Prostate gland (tissue), 2 donors: ENCODE measurements at regions of chr17 and their contacts with region 1.

Region 1: DNA sequence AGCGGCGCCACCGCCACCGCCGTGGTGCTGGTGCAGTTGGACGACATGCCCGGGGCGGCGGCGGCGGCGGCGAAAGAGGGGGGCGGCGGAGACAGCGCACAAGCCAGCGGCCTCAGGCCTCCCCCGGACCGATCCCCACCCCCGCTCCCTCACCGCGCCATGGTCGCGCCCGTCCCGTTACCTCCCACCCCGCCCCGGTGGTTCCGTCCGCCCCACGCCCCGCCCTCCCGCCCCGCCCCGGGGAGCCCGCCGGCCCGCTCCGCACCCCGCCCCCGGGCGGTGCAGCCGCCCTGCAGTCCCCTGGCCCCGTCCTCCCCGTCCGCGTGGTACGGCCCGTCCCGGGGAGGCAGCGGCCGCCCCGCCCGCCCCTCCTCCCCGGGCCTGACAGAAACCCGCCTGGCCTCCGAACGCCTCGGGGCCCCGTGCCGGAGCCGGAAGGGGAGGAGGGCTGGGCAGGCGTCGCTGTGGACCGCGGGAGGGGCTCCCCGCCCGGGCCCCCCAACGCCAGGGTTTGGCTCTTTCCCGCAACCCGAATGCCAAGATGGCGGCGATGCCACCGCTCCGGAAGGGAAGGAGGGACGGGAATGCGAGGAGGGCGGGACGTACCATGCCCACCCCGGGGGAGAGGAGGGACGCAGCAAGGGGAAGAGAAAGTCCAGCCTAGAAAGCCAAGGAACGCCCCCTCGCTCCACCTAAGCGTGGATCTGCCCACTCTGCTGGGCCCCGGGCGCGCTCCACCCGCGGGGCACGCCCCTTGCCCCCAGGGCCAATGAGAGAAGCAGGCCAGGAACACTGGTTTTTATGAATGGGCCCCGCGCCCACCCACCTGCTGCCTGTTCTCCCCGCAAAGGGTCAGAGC is at the start of gene PIP4K2B:
- DNase-seq: peak; percentile 94
- H3K4me3 ChIP-seq: peak within 1 kb of the TSS; percentile 87 to 88
- H3K27ac ChIP-seq: peak within 1 kb of the TSS; percentile 99
- H3K4me1 ChIP-seq: peaks cover 11% of the 10 kb centered on the region
- H3K27me3 ChIP-seq: no peaks in the 10 kb centered on the region
- CTCF ChIP-seq: no peak
- POLR2A ChIP-seq: no peak
- total RNA-seq, gene PIP4K2B: 46.2 to 65.2 TPM

Region 2: GRCh38 chr17:38752119-38752929 is 47.3 kb before region 1 on chr17 and contains the start of gene PSMB3:
- intact Hi-C with region 1: loop called (anchors 5 kb)
- DNase-seq: peak; percentile 99
- H3K4me3 ChIP-seq: peak within 1 kb of the TSS; percentile 90 to 99
- H3K27ac ChIP-seq: peak within 1 kb of the TSS; percentile 76 to 95
- H3K4me1 ChIP-seq: peaks cover 8% of the 10 kb centered on the region
- H3K27me3 ChIP-seq: no peaks in the 10 kb centered on the region
- CTCF ChIP-seq: peak in 1 of 4 experiments; percentile 22
- POLR2A ChIP-seq: peak; percentile 11
- total RNA-seq, gene PSMB3: 116 to 192 TPM

Region 3: DNA sequence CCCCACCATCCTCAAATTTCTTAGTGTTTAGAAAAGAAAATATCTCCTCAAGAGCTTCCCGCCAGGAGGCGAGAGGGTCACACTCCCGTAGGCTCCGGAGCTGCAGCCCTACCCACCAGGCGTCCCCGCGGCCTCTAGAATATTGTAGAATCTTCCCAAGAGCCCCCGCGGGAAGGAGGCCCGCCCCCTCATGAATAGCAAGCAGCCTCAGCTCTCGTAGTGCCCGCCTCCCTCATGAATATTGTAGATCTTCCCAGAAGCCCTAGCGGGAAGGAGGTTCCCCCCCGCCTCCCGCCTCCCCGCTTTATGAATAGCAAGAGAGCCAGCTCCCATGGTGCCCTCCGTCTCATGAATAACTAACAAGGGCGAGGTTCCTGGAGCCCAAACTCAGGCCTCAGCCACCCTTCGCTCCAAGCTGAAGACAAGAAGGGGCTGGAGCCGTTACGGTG is 167.7 kb after region 1 on chr17 and contains the start of gene FBXO47:
- intact Hi-C with region 1: no loop called
- DNase-seq: peak; percentile 87
- H3K4me3 ChIP-seq: peak within 1 kb of the TSS; percentile 7 to 14
- H3K27ac ChIP-seq: peak within 1 kb of the TSS; percentile 62 to 64
- H3K4me1 ChIP-seq: no peaks in the 10 kb centered on the region
- H3K27me3 ChIP-seq: no peaks in the 10 kb centered on the region
- CTCF ChIP-seq: peak in 2 of 4 experiments; percentile 22 to 23
- POLR2A ChIP-seq: peak; percentile 27
- total RNA-seq, gene FBXO47: 5.1 TPM in 1 of 2 donors, not detected in the other